GM10248 (cell line): ENCODE measurements at regions of chr22 and their contacts with region 1.

Region 1: DNA sequence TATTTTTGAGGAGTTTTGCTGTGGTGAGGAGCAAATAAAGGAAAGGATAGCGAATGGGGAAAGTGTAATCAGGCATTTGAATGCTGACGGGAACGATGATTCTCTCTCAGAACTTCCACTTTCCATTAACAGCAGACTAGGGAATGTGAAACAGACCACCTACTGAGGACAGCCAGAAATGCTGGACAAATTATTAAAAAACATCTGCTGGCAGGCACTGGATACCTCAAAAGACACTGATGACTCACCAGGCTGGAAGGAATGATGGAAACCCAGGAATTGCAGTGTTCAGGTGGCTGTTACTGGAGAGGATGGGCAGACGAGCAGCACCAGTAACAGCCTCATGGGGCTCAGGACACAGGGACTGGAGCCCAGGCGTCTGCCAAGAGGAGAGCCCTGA is 33.4 kb downstream of the PLA2G6 start:
- DNase-seq: no peak
- CTCF ChIP-seq: no peak

Region 2: DNA sequence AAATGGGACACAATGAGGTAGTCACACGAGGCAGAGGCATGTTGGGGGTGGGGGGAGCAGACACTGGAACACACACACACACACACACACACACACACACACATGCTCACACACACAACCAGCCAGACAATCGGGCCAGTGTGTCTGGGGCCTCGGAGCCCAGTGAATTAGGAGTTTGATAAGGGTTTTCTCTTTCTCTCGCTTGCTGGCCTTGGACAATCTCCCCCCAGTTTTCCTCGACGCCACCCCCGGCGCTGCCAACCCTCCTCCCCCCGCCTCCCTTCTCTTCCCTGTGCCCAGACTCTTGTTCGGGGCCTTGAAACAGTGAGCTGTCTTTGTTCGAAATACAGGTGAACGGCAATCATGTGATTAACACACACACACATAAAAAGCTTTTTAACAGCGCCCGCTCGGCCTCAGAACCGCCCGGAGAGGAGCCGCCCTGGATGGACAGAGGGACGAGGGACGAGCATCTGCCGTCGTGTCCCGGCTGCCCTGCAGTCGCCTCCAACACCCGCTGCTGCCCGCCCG is 162.4 kb before region 1 on chr22:
- CTCF ChIA-PET with region 1: no interaction called
- POLR2A ChIA-PET with region 1: no interaction called
- DNase-seq: no peak
- CTCF ChIP-seq: no peak

Region 3: GRCh38 chr22:38531251-38531938 is 383.1 kb after region 1 on chr22:
- CTCF ChIA-PET with region 1: no interaction called
- POLR2A ChIA-PET with region 1: interaction called, 12 read pairs
- DNase-seq: no peak
- CTCF ChIP-seq: no peak